ENCODE measurements at regions of chr22 and their contacts with region 1.

Region 1: GRCh38 chr22:33302049-33302545 is 243.9 kb upstream of the SYN3 start:
- DNase-seq: peak; percentile 77 to 89 (median 83)
- ATAC-seq: peak; percentile 83 to 91 (median 88)
- H3K4me3 ChIP-seq: peak overlapping the region in 5 of 12 donors; percentile 3 to 25 (median 11)
- H3K27ac ChIP-seq: peak overlapping the region in 8 of 12 donors; percentile 4 to 75 (median 65)
- H3K4me1 ChIP-seq: peaks cover 0 to 33% (median 10%) of the 10 kb centered on the region in 12 donors
- H3K27me3 ChIP-seq: no peaks in the 10 kb centered on the region
- CTCF ChIP-seq: peak; percentile 87 to 98 (median 94)
- POLR2A ChIP-seq: no peak

Region 2: DNA sequence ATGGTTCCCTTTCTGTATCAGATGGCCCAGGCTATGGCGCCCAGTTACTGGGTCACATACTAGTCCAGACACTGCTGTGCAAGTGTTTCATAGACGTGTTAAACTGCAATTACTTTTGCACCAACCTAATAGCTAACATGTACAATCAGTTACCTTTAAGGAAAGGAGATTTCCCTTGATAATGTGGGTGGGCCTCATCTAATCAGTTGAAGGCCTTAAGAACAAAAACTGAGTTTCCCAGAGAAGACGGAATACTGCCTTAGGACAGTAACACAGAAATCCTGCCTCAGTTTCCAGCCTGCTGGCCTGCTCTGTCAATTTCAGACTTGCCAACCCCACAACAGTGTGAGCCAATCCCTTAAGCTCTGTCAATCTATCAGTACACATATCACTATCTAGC is 14.0 kb before region 1 on chr22:
- intact Hi-C with region 1: no loop called
- DNase-seq: no peak
- ATAC-seq: no peak
- H3K4me3 ChIP-seq: no peak overlapping the region
- H3K27ac ChIP-seq: no peak overlapping the region
- H3K4me1 ChIP-seq: no peaks in the 10 kb centered on the region
- H3K27me3 ChIP-seq: no peaks in the 10 kb centered on the region
- CTCF ChIP-seq: no peak
- POLR2A ChIP-seq: no peak

Region 3: DNA sequence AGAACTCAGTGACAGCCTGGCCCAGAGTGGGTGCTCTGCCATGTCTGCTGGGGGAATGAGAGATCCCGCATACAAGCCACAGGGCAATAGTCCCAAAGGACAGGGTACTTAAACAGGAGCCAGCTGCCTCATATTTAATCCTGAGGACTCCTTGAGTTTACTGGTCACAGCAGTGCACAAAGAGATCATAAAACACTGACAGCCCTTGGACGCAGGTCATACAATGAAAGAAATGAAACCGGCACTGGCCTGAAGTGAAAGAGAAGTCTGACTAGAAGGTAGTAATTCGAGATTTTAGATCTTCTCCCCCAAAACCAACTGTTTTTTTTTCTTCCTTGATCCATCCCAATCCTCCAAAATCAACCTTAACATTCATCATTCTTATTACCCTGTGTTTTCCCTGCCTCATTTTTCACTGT is 55.9 kb after region 1 on chr22:
- intact Hi-C with region 1: loop called in 1 of 10 experiments (anchors 2 kb)
- DNase-seq: no peak
- ATAC-seq: peak in 1 of 4 donors; percentile 29
- H3K4me3 ChIP-seq: no peak overlapping the region
- H3K27ac ChIP-seq: no peak overlapping the region
- H3K4me1 ChIP-seq: peaks cover 0 to 24% (median 6%) of the 10 kb centered on the region in 12 donors
- H3K27me3 ChIP-seq: no peaks in the 10 kb centered on the region
- CTCF ChIP-seq: no peak
- POLR2A ChIP-seq: no peak

Region 4: GRCh38 chr22:33461698-33462434 is 159.8 kb after region 1 on chr22:
- intact Hi-C with region 1: loop called in 2 of 10 experiments (anchors 5 kb)
- DNase-seq: no peak
- ATAC-seq: no peak
- H3K4me3 ChIP-seq: no peak overlapping the region
- H3K27ac ChIP-seq: no peak overlapping the region
- H3K4me1 ChIP-seq: peaks cover 0 to 30% (median 9%) of the 10 kb centered on the region in 12 donors
- H3K27me3 ChIP-seq: no peaks in the 10 kb centered on the region
- CTCF ChIP-seq: no peak
- POLR2A ChIP-seq: no peak

Region 5: GRCh38 chr22:33513388-33514338 is 211.6 kb after region 1 on chr22:
- intact Hi-C with region 1: loop called in 9 of 10 experiments (anchors 2 to 10 kb)
- DNase-seq: no peak
- ATAC-seq: no peak
- H3K4me3 ChIP-seq: no peak overlapping the region
- H3K27ac ChIP-seq: no peak overlapping the region
- H3K4me1 ChIP-seq: peaks cover 0 to 21% (median 8%) of the 10 kb centered on the region in 12 donors
- H3K27me3 ChIP-seq: no peaks in the 10 kb centered on the region
- CTCF ChIP-seq: no peak
- POLR2A ChIP-seq: no peak

Region 6: GRCh38 chr22:33579448-33580093 is 277.5 kb after region 1 on chr22:
- intact Hi-C with region 1: loop called (anchors 1 to 5 kb)
- DNase-seq: peak in 4 of 5 donors; percentile 65 to 70 (median 69)
- ATAC-seq: peak; percentile 88 to 92 (median 90)
- H3K4me3 ChIP-seq: no peak overlapping the region
- H3K27ac ChIP-seq: peak overlapping the region in 2 of 12 donors; percentile 13 to 37
- H3K4me1 ChIP-seq: peaks cover 0 to 34% (median 14%) of the 10 kb centered on the region in 12 donors
- H3K27me3 ChIP-seq: no peaks in the 10 kb centered on the region
- CTCF ChIP-seq: peak; percentile 77 to 98 (median 92)
- POLR2A ChIP-seq: no peak

Region 7: GRCh38 chr22:34105461-34106062 is 803.5 kb after region 1 on chr22:
- intact Hi-C with region 1: loop called (anchors 2 to 5 kb)
- DNase-seq: peak in 4 of 5 donors; percentile 31 to 62 (median 51)
- ATAC-seq: peak in 3 of 4 donors; percentile 72 to 82 (median 78)
- H3K4me3 ChIP-seq: no peak overlapping the region
- H3K27ac ChIP-seq: no peak overlapping the region
- H3K4me1 ChIP-seq: no peaks in the 10 kb centered on the region
- H3K27me3 ChIP-seq: peaks cover 0 to 11% (median 0%) of the 10 kb centered on the region in 9 donors
- CTCF ChIP-seq: peak; percentile 50 to 77 (median 68)
- POLR2A ChIP-seq: no peak

Region 8: DNA sequence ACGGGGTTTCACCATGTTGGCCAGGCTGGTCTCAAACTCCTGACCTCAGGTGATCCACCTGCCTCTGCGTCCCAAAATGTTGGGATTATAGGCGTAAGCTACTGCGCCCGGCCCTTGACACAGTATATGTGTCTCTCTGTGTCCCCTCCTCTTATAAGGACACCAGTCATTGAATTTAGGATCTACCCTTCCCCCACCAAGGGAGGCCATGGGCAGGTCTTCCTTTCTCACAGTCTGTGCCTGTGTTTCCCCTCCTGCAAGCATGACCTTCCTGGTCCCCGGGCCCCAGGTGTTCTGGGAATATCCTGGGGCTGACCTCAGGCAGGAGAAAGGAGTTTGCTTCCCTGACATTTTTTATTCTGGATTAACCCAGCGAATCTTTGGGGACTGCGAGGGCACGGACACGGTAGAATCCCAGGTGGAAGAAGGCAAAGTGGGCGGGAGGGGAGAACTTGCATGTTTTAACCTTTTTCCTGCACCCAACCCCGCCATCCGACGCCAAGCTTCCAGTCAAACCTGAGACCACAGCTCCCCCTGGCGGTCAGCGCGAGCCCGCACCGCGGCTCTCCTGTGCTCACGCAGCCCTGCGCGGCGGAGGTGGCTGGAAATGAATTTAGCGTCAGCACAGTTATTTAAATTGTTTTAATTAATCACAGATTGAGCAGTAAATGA is 1721.7 kb after region 1 on chr22:
- intact Hi-C with region 1: loop called in 3 of 10 experiments (anchors 10 kb)
- DNase-seq: peak; percentile 49 to 84 (median 52)
- ATAC-seq: peak in 3 of 4 donors; percentile 64 to 76 (median 68)
- H3K4me3 ChIP-seq: no peak overlapping the region
- H3K27ac ChIP-seq: no peak overlapping the region
- H3K4me1 ChIP-seq: peaks cover 0 to 6% (median 0%) of the 10 kb centered on the region in 12 donors
- H3K27me3 ChIP-seq: peaks cover 0 to 30% (median 10%) of the 10 kb centered on the region in 9 donors
- CTCF ChIP-seq: peak; percentile 68 to 92 (median 82)
- POLR2A ChIP-seq: no peak

Measured in heart left ventricle (tissue), 16 donors.